ENCODE measurements at regions of chr9 and their contacts with region 1.

Region 1: GRCh38 chr9:36166101-36166927 is 2.9 kb upstream of the CCIN start:
- H3K4me3 ChIP-seq: peak overlapping the region; percentile 21; the same call in 1 of the 2 replicates
- H3K27ac ChIP-seq: no peak overlapping the region
- H3K4me1 ChIP-seq: peaks cover 4% of the 10 kb centered on the region; the same call in 1 of the 2 replicates
- CTCF ChIP-seq: peak; percentile 83

Region 2: GRCh38 chr9:35732122-35732799 is 434.1 kb before region 1 on chr9 and contains the starts of genes CREB3 and TLN1:
- CTCF ChIA-PET with region 1: no interaction called
- POLR2A ChIA-PET with region 1: no interaction called
- H3K4me3 ChIP-seq: peak within 1 kb of the TSS; percentile 81
- H3K27ac ChIP-seq: peak within 1 kb of the TSS; percentile 81
- H3K4me1 ChIP-seq: peaks cover 13% of the 10 kb centered on the region
- CTCF ChIP-seq: peak; percentile 81

Region 3: DNA sequence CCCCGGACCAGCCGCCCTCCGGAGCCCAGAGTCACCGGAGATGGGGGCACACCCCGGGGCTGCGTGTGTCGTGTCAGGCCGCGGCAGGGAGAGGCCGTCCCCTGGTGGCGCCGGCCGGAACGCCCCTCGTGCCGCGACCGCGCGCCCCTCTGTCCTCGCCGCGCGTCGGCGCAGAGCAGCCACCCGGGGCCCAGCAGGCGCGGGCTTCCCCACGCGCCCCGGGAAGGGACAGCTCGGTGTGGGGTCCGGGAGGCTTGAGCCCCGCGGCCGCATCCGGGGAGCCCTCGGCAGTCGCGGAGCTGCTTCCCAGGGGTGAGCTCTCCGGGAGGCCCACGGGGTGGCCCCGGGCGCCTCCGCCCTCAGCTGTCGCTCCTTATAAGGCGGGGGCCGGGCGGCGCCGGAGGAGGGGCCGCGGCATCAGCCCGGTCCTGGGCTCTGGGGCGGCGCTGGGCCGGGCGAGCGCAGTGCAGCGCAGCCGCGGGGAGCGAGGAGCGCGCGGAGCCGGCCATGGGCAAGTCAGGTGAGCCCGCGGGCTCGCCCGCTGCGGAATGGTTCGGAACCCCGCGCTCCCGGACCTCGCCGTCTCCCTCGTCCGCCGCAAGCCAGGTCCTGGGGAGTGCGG is 29.9 kb before region 1 on chr9 and contains the start of gene GLIPR2:
- CTCF ChIA-PET with region 1: interaction called, 55 read pairs
- POLR2A ChIA-PET with region 1: interaction called, 7 read pairs
- H3K4me3 ChIP-seq: peak within 1 kb of the TSS; percentile 62
- H3K27ac ChIP-seq: peak within 1 kb of the TSS; percentile 56; the same call in 1 of the 2 replicates
- H3K4me1 ChIP-seq: no peaks in the 10 kb centered on the region
- CTCF ChIP-seq: peak; percentile 40; the same call in 1 of the 2 replicates

Region 4: GRCh38 chr9:36148311-36149051 is 17.8 kb before region 1 on chr9:
- CTCF ChIA-PET with region 1: interaction called, 9 read pairs
- POLR2A ChIA-PET with region 1: interaction called, 17 read pairs
- H3K4me3 ChIP-seq: no peak overlapping the region
- H3K27ac ChIP-seq: no peak overlapping the region
- H3K4me1 ChIP-seq: peaks cover 3% of the 10 kb centered on the region; the same call in 1 of the 2 replicates
- CTCF ChIP-seq: no peak

Region 5: DNA sequence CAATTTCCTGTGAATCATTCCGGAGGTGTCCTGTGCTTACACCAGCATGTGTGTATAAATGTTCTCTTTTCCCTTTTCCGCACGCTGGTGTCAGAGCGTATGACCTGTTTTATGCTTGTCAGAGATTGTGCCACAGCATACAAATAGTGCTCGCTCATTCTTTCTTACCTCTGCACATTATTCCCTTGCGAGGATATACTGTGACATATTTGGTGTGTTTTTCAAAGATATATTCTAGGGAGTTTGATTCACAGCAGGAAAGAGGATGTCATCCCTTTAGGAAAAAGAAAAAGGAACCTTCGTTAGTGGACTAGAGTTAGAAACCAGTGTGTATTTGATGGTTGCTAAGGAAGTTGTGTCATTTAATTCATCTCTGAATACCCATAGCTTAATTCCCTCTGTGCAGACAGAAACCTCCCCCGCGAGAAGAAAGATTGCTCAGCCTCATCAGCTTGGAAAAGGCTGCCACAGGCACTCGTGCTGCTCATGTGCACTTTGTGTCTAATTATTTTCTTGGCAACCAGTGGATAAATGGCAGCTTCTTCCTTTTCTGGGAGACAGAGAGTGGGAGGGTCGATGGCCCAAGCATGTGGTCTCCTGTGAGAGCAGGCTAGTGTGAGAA is 11.9 kb before region 1 on chr9:
- CTCF ChIA-PET with region 1: interaction called, 22 read pairs
- POLR2A ChIA-PET with region 1: interaction called, 17 read pairs
- H3K4me3 ChIP-seq: no peak overlapping the region
- H3K27ac ChIP-seq: no peak overlapping the region
- H3K4me1 ChIP-seq: no peaks in the 10 kb centered on the region; the same call in 1 of the 2 replicates
- CTCF ChIP-seq: no peak

Measured in HEK293 (cell line).